Panc1 (cell line): ENCODE measurements at regions of chr18 and their contacts with region 1.

Region 1: DNA sequence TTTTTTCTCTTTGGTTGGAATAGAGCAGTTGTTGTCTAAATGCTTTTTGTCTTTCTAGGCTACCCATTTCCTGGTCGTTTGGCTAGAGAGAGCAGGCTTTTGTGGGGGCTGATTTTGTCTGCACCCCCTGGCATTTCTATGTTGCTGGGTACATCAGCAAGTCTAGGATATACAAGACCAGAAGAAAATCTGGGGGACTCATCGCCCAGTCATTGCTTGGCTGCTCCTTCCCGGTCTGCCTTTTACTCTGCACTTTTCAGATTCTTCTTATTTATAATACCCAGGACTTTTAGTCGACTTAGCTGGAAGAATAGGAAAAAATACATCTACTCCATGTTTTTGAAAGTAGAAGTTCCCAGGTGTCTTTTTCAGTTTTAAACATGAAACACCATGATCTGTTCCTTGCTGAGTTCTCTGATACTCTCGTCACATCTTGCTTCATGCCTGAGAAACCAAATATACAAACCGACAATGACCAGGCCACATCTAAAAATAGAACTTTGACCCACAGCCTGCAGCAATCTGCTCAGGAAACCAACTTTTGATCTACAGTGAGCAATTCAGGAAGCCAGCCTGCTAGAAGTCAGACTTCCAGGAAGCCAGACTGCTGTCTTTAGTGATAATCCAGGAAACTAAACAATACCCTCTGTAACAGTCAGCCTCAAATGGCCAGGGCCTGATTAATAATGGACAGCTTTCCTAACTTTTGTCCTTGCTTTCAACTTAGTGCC is 163.8 kb upstream of the MEX3C start:
- DNase-seq: no peak
- ATAC-seq: no peak
- H3K4me3 ChIP-seq: no peak overlapping the region
- H3K27ac ChIP-seq: no peak overlapping the region
- H3K4me1 ChIP-seq: no peaks in the 10 kb centered on the region
- H3K27me3 ChIP-seq: no peaks in the 10 kb centered on the region
- CTCF ChIP-seq: no peak

Region 2: DNA sequence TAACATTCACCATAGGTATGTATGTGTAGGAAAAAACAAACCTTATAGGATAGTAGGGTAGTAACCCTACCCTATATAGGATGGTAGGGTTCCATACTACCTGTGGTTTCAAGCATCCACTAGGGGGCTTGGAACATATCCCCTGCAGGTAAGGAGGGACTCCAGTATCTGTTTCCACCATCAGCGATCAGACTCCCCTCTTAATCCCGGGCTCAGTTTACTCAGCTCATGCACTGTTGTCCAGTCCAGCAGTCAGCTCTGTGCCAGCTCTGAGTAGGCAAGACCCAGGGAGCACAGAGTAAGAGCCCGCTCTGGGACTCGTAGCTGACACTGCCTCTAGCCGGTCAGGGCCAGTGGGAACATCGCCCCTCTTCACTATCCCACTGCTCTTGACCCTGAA is 225.5 kb before region 1 on chr18:
- CTCF ChIA-PET with region 1: no interaction called
- POLR2A ChIA-PET with region 1: no interaction called
- in situ Hi-C with region 1: no loop called
- intact Hi-C with region 1: no loop called
- DNase-seq: no peak
- ATAC-seq: peak; percentile 65
- H3K4me3 ChIP-seq: no peak overlapping the region
- H3K27ac ChIP-seq: no peak overlapping the region
- H3K4me1 ChIP-seq: no peaks in the 10 kb centered on the region
- H3K27me3 ChIP-seq: no peaks in the 10 kb centered on the region
- CTCF ChIP-seq: peak; percentile 41

Region 3: DNA sequence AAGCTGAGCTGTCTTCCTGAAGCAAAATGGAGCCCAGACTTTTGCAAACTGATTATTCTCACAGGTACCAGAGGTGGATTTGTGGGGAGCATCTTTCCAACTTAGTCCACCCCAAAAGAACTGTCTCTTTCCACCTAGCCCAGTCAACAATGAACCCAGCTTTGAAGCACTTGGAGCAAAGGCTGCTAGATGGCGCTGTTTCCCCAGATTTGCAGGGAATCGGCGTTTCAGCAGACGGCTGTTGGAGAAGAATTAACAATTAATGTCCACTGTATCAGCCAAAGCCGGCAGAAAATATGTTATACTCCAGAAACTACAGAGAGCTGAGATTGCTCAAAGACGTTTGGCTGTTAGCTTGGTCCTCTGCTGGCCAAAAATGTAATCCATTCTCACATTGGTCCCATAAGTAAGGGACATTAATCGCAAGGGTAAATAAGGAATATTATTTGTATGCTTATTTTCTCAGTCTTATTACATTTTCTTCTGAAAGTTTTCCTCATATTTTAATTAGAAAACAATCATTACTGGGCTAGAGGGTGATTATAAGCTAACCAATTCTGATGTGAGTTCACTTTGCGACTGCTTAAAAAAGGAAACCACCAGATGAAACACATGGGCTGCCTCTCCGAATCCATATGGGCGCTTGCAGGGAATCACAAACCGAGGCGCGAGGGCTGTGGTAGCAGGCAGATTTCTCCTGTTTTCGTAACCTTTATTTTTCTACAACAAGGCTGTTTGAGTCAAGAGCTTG is 260.0 kb after region 1 on chr18:
- CTCF ChIA-PET with region 1: interaction called, 10 read pairs
- POLR2A ChIA-PET with region 1: no interaction called
- in situ Hi-C with region 1: no loop called
- intact Hi-C with region 1: no loop called
- DNase-seq: peak; percentile 42
- ATAC-seq: peak; percentile 68; the same call in 1 of the 2 replicates
- H3K4me3 ChIP-seq: no peak overlapping the region
- H3K27ac ChIP-seq: no peak overlapping the region
- H3K4me1 ChIP-seq: no peaks in the 10 kb centered on the region
- H3K27me3 ChIP-seq: no peaks in the 10 kb centered on the region
- CTCF ChIP-seq: peak; percentile 73